IMR-90 (cell line): ENCODE measurements at regions of chr3 and their contacts with region 1.

Region 1: DNA sequence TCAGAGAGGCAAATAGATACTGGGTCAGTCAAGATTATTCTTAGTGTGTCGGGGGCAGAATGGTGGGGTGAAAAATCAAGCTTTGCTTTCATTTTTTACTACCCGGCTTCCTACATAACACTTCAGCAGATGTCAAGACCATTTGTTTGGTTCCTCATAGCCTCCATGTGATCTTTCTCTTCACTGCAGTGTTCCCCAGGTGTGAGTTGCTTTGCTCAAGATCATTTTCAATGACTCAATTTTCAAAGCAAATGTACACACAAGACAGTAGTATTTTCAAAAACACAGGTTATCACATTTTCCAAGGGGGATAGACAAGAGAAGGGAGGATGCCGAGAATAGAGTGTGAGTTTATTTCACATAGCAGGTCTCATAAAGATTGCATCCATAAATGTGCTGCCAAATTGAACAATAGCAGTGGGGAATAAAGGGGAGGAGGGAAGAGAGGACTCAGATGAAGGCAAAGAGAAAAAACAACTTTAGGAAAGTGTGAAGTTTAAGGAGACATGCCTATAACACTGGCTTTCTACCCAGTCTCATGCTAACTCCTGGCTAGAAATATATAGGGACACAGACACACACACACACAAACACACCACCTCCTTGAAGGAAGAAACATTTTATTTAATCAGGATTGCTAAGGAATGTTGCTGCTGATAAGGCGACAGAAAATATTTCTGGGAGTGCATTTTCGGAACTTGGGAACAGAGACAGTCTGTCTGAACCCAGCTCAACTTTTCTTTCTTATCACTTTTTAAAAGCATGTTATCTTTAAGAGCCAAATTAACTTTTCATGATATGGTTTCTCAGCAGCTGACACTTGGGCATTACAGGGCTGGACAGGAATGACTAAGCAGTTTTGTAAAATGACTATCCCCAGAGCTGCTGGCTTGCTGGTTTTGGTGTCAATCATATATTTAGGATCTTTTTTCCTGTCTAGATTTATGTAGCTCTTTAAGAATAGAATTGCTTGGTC is 402.4 kb downstream of the RBMS3 start:
- DNase-seq: peak; percentile 68
- ATAC-seq: peak; percentile 57
- H3K4me3 ChIP-seq: no peak overlapping the region
- H3K27ac ChIP-seq: peak overlapping the region; percentile 11; the same call in 1 of the 2 replicates
- H3K4me1 ChIP-seq: peaks cover 10% of the 10 kb centered on the region; the same call in 1 of the 2 replicates
- H3K27me3 ChIP-seq: no peaks in the 10 kb centered on the region
- CTCF ChIP-seq: no peak
- POLR2A ChIP-seq: no peak
- RAD21 ChIP-seq: no peak

Region 2: GRCh38 chr3:29267226-29267625 is 416.1 kb before region 1 on chr3:
- CTCF ChIA-PET with region 1: no interaction called
- POLR2A ChIA-PET with region 1: no interaction called
- dilution Hi-C with region 1: no loop called
- in situ Hi-C with region 1: no loop called
- intact Hi-C with region 1: no loop called
- DNase-seq: no peak
- ATAC-seq: no peak
- H3K4me3 ChIP-seq: no peak overlapping the region
- H3K27ac ChIP-seq: no peak overlapping the region
- H3K4me1 ChIP-seq: no peaks in the 10 kb centered on the region
- H3K27me3 ChIP-seq: no peaks in the 10 kb centered on the region
- CTCF ChIP-seq: no peak
- POLR2A ChIP-seq: no peak
- RAD21 ChIP-seq: no peak

Region 3: GRCh38 chr3:29642393-29643033 is 40.8 kb before region 1 on chr3:
- CTCF ChIA-PET with region 1: no interaction called
- POLR2A ChIA-PET with region 1: interaction called, 3 read pairs
- dilution Hi-C with region 1: no loop called
- in situ Hi-C with region 1: no loop called
- intact Hi-C with region 1: loop called (anchors 2 kb)
- DNase-seq: peak; percentile 70
- ATAC-seq: peak; percentile 57; the same call in 1 of the 2 replicates
- H3K4me3 ChIP-seq: no peak overlapping the region
- H3K27ac ChIP-seq: no peak overlapping the region
- H3K4me1 ChIP-seq: peaks cover 4% of the 10 kb centered on the region; the same call in 1 of the 2 replicates
- H3K27me3 ChIP-seq: no peaks in the 10 kb centered on the region
- CTCF ChIP-seq: no peak
- POLR2A ChIP-seq: no peak
- RAD21 ChIP-seq: no peak

Region 4: GRCh38 chr3:29653680-29654079 is 29.6 kb before region 1 on chr3:
- CTCF ChIA-PET with region 1: no interaction called
- POLR2A ChIA-PET with region 1: no interaction called
- dilution Hi-C with region 1: no loop called
- in situ Hi-C with region 1: no loop called
- intact Hi-C with region 1: no loop called
- DNase-seq: no peak
- ATAC-seq: no peak
- H3K4me3 ChIP-seq: no peak overlapping the region
- H3K27ac ChIP-seq: no peak overlapping the region
- H3K4me1 ChIP-seq: peaks cover 3% of the 10 kb centered on the region
- H3K27me3 ChIP-seq: no peaks in the 10 kb centered on the region
- CTCF ChIP-seq: no peak
- POLR2A ChIP-seq: no peak
- RAD21 ChIP-seq: no peak

Region 5: GRCh38 chr3:29949131-29949530 is 265.8 kb after region 1 on chr3:
- CTCF ChIA-PET with region 1: no interaction called
- POLR2A ChIA-PET with region 1: no interaction called
- dilution Hi-C with region 1: no loop called
- in situ Hi-C with region 1: no loop called
- intact Hi-C with region 1: no loop called
- DNase-seq: peak; percentile 35
- ATAC-seq: peak; percentile 78
- H3K4me3 ChIP-seq: no peak overlapping the region
- H3K27ac ChIP-seq: no peak overlapping the region
- H3K4me1 ChIP-seq: peaks cover 7% of the 10 kb centered on the region
- H3K27me3 ChIP-seq: no peaks in the 10 kb centered on the region
- CTCF ChIP-seq: no peak
- POLR2A ChIP-seq: no peak
- RAD21 ChIP-seq: no peak